PC-3 (cell line): ENCODE measurements at regions of chr1 and their contacts with region 1.

Region 1: DNA sequence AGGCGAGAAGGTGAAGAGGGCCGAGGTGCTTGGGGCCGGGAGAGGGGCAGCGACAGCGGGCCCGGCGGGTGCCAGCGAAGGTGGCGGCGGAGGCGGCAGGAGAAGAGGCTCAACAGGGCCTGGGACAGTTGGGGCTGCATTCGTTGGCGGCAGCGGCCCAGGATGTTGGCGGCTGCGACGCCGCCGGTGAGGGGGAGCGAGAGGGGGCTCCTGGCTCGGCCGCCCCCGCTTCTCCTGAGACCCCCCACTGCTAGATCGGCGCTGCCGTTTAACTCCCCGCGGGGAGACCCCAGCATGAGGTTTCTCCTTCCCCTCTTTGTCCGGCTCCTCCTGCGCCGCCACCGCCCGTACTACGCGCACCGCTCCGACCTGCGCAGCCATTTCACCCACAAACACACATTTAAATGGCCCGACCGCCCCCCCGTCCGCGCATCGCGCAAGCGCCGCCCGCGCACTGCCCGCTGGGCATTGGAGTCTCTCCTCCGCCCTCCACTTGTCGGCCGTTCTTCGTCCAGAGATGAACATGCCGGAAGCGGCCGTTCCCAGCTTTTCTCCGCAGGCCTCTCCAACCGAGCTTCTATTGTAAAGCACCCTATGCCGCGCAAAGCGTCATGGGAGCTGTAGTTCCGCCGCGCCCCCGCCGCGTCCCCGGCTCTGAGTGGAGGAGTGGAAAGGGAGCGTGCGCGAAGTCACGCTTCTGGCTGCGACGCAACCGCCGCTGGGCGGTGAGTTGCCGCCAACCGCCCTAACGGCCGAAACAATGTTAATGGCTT is at the start of gene RSBN1:
- DNase-seq: peak; percentile 99
- ATAC-seq: peak; percentile 93
- H3K4me3 ChIP-seq: peak within 1 kb of the TSS; percentile 92
- H3K27ac ChIP-seq: peak within 1 kb of the TSS; percentile 59
- H3K4me1 ChIP-seq: peaks cover 29% of the 10 kb centered on the region
- H3K27me3 ChIP-seq: no peaks in the 10 kb centered on the region
- CTCF ChIP-seq: no peak
- total RNA-seq, gene RSBN1: 8.4 and 11.7 TPM in 2 replicates

Region 2: GRCh38 chr1:113759333-113760101 is 52.6 kb before region 1 on chr1 and contains the start of gene PHTF1:
- CTCF ChIA-PET with region 1: no interaction called
- POLR2A ChIA-PET with region 1: interaction called, 7 read pairs
- intact Hi-C with region 1: loop called (anchors 2 kb)
- DNase-seq: peak; percentile 78
- ATAC-seq: peak; percentile 84
- H3K4me3 ChIP-seq: peak within 1 kb of the TSS; percentile 91
- H3K27ac ChIP-seq: peak within 1 kb of the TSS; percentile 80
- H3K4me1 ChIP-seq: peaks cover 5% of the 10 kb centered on the region; the same call in 1 of the 2 replicates
- H3K27me3 ChIP-seq: no peaks in the 10 kb centered on the region
- CTCF ChIP-seq: no peak
- total RNA-seq, gene PHTF1: 23.4 and 27.3 TPM in 2 replicates

Region 3: DNA sequence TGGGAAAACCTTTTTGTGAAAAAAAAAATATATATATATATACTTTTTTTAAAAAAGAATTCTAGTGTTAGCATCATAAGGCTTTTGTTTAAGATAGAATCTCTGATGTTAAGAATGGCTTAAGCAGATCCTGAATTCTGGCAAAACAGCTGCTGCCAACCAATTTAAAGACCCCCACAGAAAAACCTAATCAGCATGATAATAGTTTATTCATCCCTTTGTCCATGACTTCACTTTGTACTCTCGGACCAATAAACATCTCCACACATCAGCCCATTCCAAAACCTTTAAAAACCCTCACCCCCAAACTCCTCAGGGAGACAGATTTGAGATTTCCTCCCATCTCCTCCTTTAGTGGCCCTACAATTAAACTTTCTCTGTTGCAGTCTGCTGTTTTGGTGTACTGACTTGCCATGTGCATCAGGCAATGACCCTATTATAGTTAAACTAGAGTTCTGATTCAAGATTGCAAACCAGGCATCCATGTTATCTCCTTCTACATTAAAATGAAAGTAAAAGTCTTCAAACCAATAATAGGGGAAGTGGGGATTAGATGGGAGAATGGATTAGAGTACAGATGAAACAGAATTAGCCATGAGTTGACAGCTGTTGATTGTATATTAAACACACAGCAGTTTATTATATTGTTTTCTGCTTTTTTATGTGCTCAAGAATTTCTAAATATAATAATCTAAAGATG is 43.0 kb before region 1 on chr1:
- CTCF ChIA-PET with region 1: no interaction called
- POLR2A ChIA-PET with region 1: interaction called, 10 read pairs
- intact Hi-C with region 1: no loop called
- DNase-seq: no peak
- ATAC-seq: no peak
- H3K4me3 ChIP-seq: no peak overlapping the region
- H3K27ac ChIP-seq: no peak overlapping the region
- H3K4me1 ChIP-seq: no peaks in the 10 kb centered on the region
- H3K27me3 ChIP-seq: no peaks in the 10 kb centered on the region
- CTCF ChIP-seq: no peak

Region 4: DNA sequence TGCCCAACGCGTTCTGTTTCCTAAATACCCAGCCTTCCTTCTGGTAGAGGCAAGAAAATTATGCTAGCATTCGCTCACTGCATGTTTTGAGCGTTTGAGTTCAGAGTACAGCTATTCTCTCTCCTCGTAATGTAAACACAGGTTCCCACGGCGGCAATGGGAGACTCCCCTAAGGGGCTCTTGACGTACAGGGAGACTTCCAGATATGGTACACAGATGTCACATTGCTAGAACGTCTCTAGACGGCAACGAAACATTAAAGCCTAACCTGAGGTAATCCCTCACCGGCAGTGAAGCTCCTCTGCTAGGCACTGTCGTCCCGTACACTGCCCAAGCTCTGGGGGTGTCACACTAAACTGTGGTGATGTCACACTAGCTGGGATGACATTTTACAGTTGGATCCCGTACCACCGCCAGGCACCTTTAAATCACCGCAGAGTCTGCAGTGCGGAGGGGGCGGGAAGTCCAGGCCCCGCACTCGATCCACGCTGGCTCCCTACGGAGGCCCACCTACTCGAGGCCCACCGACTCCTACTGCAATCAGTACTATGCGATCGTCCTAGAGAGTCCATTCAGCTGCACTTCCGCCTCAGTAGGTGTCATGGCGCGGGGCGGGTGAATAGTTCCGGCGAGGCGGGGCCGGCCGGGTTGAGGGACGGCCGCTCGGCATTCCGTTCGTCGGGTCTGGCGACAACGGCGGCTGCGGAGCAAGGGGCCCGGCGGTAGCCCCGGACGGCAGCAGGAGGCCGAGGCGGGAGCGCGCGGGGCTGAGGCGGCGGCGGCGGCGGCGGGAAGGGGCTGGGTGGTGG is 117.1 kb after region 1 on chr1 and contains the start of gene HIPK1:
- CTCF ChIA-PET with region 1: interaction called, 3 read pairs
- POLR2A ChIA-PET with region 1: no interaction called
- intact Hi-C with region 1: loop called (anchors 1 kb)
- DNase-seq: peak; percentile 85
- ATAC-seq: peak; percentile 74
- H3K4me3 ChIP-seq: peak within 1 kb of the TSS; percentile 86
- H3K27ac ChIP-seq: peak within 1 kb of the TSS; percentile 41
- H3K4me1 ChIP-seq: peaks cover 32% of the 10 kb centered on the region
- H3K27me3 ChIP-seq: no peaks in the 10 kb centered on the region
- CTCF ChIP-seq: no peak
- total RNA-seq, gene HIPK1: 18.7 and 19.9 TPM in 2 replicates